ENCODE measurements at regions of chr1 and their contacts with region 1.

Region 1: GRCh38 chr1:6108937-6109614 is 63.4 kb downstream of the KCNAB2 start:
- DNase-seq: no peak
- H3K4me3 ChIP-seq: no peak overlapping the region
- H3K27ac ChIP-seq: no peak overlapping the region
- H3K4me1 ChIP-seq: no peaks in the 10 kb centered on the region
- H3K27me3 ChIP-seq: peaks cover 0 to 27% of the 10 kb centered on the region in 2 donors
- CTCF ChIP-seq: peak in 1 of 3 donors; percentile 30
- POLR2A ChIP-seq: no peak

Region 2: DNA sequence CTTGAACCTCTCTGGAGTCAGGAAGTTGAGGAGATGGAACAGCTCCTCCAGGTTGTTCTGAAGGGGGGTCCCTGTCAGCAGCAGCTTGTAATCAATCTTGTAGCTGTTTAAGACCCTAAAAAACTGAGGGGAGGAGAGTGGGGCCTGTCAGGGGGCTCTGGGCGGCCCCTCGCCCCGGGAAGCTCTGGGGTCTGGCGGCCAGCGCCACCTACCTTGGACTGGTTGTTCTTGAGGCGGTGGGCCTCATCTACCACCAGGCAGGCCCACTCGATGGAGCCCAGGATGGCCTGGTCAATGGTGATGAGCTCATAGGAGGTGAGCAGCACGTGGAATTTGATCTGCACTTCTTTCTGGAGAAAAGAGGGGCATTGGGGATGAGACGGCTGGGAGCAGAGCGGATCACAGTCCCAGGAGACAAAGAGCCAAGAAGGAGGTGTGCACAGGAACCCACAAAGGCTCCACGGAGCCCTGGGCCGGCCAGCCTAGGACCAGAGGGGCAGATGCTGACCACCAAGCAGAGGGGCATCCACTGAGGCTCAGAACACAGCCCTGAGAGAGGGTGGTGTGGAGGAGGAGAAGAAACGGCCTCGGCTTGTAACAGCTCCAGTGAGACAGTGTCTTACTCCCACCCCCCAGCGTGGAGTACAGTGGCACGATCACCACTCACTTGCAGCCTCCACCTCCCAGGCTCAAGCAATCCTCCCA is 27.6 kb after region 1 on chr1:
- intact Hi-C with region 1: loop called (anchors 1 kb)
- DNase-seq: no peak
- H3K4me3 ChIP-seq: no peak overlapping the region
- H3K27ac ChIP-seq: no peak overlapping the region
- H3K4me1 ChIP-seq: no peaks in the 10 kb centered on the region
- H3K27me3 ChIP-seq: no peaks in the 10 kb centered on the region
- CTCF ChIP-seq: no peak
- POLR2A ChIP-seq: no peak

Region 3: GRCh38 chr1:6154525-6155319 is 45.6 kb after region 1 on chr1:
- intact Hi-C with region 1: loop called (anchors 1 kb)
- DNase-seq: no peak
- H3K4me3 ChIP-seq: no peak overlapping the region
- H3K27ac ChIP-seq: no peak overlapping the region
- H3K4me1 ChIP-seq: peaks cover 0 to 7% of the 10 kb centered on the region in 2 donors
- H3K27me3 ChIP-seq: peaks cover 0 to 3% of the 10 kb centered on the region in 2 donors
- CTCF ChIP-seq: no peak
- POLR2A ChIP-seq: no peak

Region 4: DNA sequence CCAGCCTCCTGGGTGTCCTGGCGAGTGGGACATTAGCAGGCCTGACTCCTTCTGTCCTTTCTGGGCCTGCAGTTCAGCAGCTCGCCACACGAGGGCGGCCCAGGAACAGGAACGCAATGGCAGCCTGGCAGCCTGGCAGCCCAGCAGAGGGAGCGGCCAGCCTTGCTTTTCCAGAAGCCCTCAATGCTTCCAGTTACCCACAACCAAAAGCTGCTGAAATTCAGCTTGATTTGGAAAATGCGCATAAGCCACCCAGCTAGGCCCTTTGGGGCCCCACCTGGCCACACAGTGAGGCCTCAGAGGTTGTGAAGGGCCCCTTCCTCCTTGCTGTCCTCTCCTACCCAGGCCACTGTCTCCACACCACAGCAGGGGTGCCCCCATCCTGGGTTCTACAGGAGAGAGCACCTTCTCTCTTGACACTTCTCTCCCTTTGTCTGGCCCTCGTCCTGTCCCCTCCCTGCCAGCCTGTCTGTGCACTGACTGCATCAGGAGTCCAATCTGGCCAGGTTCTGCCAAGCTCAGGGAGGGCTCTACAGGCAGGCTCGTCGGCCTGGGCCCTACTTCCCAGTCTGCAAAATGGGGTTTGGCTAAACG is 1558.6 kb after region 1 on chr1:
- intact Hi-C with region 1: no loop called
- DNase-seq: peak; percentile 85 to 93
- H3K4me3 ChIP-seq: no peak overlapping the region
- H3K27ac ChIP-seq: peak overlapping the region in 1 of 2 donors; percentile 28
- H3K4me1 ChIP-seq: no peaks in the 10 kb centered on the region
- H3K27me3 ChIP-seq: no peaks in the 10 kb centered on the region
- CTCF ChIP-seq: peak; percentile 98 to 100 (median 99)
- POLR2A ChIP-seq: no peak

Measured in breast epithelium (tissue), 4 donors.